Heart left ventricle (tissue), 16 donors: ENCODE measurements at regions of chr20 and their contacts with region 1.

Region 1: DNA sequence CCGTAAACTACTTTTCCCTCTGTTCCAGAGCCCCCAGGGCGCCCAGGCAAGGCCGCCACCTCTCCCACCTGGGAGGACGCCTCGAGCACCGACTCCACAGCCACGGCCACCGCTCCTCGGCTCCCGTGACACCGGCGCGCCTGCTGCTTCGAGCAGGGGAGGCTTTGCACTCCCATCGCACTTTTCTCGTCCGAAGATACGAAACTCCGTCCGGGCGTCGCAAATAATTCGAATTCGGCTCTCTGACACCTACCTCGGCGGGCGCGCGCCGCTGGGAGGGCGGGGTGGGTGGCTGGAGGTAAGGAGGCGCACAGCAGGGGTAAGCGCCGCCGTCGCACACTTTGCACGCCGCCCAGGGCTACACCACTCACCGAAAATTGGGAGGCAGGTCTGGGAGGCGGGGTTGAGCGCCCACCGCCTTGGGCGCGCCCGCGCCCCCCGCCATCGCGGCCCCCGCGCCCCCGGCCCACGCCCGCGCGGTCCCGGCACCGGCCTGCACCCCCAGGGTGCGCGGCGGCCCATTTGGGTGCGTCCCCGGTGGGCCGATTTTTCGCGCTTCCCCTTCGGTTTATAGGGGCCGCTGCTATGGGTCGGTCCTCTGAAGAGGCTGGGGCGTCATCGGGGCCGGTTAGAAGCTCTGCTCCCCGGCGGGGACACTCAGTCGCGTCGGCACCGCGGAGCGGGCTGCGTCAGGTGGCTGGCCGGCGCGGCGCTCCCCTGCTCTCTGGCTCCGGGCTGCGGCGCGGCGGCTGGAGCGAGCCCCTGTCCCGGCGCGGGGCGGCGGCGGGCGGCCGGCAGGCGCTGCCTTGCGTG is 36.2 kb downstream of the GNAS start:
- DNase-seq: peak; percentile 82 to 90 (median 86)
- ATAC-seq: peak; percentile 56 to 73 (median 70)
- H3K4me3 ChIP-seq: peak overlapping the region; percentile 21 to 97 (median 86)
- H3K27ac ChIP-seq: peak overlapping the region; percentile 56 to 100 (median 98)
- H3K4me1 ChIP-seq: peaks cover 0 to 19% (median 9%) of the 10 kb centered on the region in 12 donors
- H3K27me3 ChIP-seq: no peaks in the 10 kb centered on the region
- CTCF ChIP-seq: no peak
- POLR2A ChIP-seq: peak; percentile 87 to 96

Region 2: GRCh38 chr20:58112017-58112781 is 776.5 kb before region 1 on chr20:
- intact Hi-C with region 1: no loop called
- DNase-seq: no peak
- ATAC-seq: peak in 2 of 4 donors; percentile 16 to 46
- H3K4me3 ChIP-seq: no peak overlapping the region
- H3K27ac ChIP-seq: peak overlapping the region in 4 of 12 donors; percentile 15 to 45 (median 25)
- H3K4me1 ChIP-seq: peaks cover 0 to 5% (median 0%) of the 10 kb centered on the region in 12 donors
- H3K27me3 ChIP-seq: peaks cover 0 to 6% (median 0%) of the 10 kb centered on the region in 9 donors
- CTCF ChIP-seq: no peak
- POLR2A ChIP-seq: no peak

Region 3: GRCh38 chr20:58388882-58389323 is 499.8 kb before region 1 on chr20 and contains the start of gene VAPB:
- intact Hi-C with region 1: loop called in 1 of 10 experiments (anchors 5 kb)
- DNase-seq: peak; percentile 94 to 99 (median 96)
- ATAC-seq: peak; percentile 99 to 100 (median 99)
- H3K4me3 ChIP-seq: peak within 1 kb of the TSS; percentile 69 to 91 (median 86)
- H3K27ac ChIP-seq: peak within 1 kb of the TSS; percentile 80 to 97 (median 94)
- H3K4me1 ChIP-seq: peaks cover 0 to 46% (median 29%) of the 10 kb centered on the region in 12 donors
- H3K27me3 ChIP-seq: no peaks in the 10 kb centered on the region
- CTCF ChIP-seq: no peak
- POLR2A ChIP-seq: peak in 1 of 2 donors; percentile 85
- total RNA-seq, gene VAPB: 30.7 to 76.1 (median 63.8) TPM

Region 4: GRCh38 chr20:58980700-58981627 is 92.2 kb after region 1 on chr20 and contains the start of gene NELFCD:
- intact Hi-C with region 1: loop called in 8 of 10 experiments (anchors 1 to 5 kb)
- DNase-seq: peak; percentile 89 to 95 (median 91)
- ATAC-seq: peak; percentile 83 to 96 (median 94)
- H3K4me3 ChIP-seq: peak within 1 kb of the TSS; percentile 64 to 96 (median 78)
- H3K27ac ChIP-seq: peak within 1 kb of the TSS; percentile 53 to 93 (median 84)
- H3K4me1 ChIP-seq: peaks cover 0 to 44% (median 29%) of the 10 kb centered on the region in 12 donors
- H3K27me3 ChIP-seq: no peaks in the 10 kb centered on the region
- CTCF ChIP-seq: no peak
- POLR2A ChIP-seq: peak in 1 of 2 donors; percentile 88
- total RNA-seq, gene NELFCD: 21.7 to 43.8 (median 27.7) TPM

Region 5: DNA sequence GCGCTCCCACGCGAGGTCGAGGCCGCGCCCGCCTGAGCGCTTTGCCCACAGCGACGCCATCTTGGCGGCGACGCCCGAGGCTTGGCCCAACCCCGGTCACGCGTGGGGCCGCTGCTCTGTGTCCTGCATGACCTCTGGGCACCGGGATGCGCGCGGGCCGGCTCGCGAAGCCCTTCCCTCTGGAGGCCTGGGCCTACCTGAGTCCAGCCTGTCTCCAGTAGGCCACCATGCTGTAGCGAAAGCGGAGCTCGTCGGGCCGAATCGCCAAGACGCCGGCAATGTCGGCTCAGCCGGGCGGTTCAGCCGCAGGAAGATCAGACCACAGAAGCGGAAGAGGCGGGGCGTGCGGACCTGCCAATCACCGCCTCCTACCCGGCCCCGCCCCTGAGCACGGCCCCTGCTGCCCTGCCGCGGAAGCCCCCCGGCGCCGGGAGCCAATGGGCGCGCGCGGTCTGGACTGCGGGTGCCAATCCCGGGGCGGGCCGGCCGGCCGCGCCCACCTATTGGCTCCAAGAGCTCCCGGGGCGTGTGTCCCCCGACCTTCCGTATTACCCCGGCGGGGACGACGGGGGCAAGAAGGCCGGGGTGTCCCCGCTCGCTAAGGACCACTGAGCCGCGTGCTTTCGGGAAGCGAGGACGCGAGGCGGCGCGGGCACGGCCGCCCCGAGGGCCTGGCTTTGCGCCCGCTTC is 143.4 kb after region 1 on chr20 and contains the start of gene ATP5F1E:
- intact Hi-C with region 1: loop called in 7 of 10 experiments (anchors 2 to 5 kb)
- DNase-seq: peak; percentile 97 to 98 (median 98)
- ATAC-seq: peak; percentile 99 to 100 (median 100)
- H3K4me3 ChIP-seq: peak within 1 kb of the TSS; percentile 59 to 94 (median 83)
- H3K27ac ChIP-seq: peak within 1 kb of the TSS; percentile 83 to 98 (median 92)
- H3K4me1 ChIP-seq: peaks cover 0 to 52% (median 48%) of the 10 kb centered on the region in 12 donors
- H3K27me3 ChIP-seq: no peaks in the 10 kb centered on the region
- CTCF ChIP-seq: peak in 1 of 12 donors; percentile 3
- POLR2A ChIP-seq: peak; percentile 86 to 97
- total RNA-seq, gene ATP5F1E: 38.5 to 153 (median 116) TPM

Region 6: DNA sequence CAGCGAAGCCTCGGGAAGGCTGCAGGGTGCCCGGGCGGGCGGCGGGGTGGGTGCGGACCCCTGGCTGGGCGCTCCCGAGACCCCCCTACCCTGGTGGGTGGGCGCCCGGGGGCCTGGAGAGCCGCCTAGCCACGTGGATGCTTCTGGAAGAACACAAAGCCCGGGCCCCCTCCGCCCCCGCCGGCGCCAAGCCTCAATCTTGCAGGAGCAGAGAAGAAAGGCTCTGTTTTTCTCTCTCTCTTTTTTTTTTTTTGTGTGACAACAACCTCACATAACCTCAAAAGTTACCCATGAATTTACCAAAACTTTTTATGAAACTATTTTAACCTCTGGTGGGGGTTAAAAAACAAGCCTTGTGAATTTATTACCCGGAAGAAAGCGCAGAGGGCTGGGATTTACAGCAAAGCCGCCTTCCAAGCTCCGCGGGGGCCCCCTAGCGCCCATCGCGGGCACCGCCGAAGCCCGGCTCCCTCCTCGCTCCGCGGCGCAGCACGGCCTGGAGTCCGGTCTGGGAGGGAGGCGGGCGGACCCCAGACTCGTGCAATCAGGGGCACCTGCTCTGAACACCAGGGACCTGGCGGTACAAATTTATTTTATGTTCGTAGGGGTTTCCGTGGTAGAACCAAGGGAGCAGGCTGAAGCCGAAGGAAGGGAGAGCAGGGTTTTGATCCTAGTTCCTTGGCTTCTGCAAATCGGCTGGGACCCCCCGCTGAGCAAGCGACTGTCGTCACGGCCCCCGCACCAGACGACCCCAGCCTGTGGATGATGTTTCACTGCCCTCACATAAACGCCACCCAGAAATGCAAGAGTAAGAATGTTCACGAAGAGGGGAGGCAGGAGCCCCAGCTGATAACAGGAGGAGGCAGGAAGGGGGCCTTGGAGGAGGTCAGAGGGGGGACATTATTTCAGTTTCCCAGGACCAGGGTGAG is 333.8 kb after region 1 on chr20:
- intact Hi-C with region 1: loop called in 1 of 10 experiments (anchors 5 kb)
- DNase-seq: peak; percentile 72 to 90 (median 81)
- ATAC-seq: peak; percentile 71 to 97 (median 92)
- H3K4me3 ChIP-seq: peak overlapping the region; percentile 21 to 66 (median 58)
- H3K27ac ChIP-seq: peak overlapping the region in 9 of 12 donors; percentile 7 to 87 (median 72)
- H3K4me1 ChIP-seq: peaks cover 0 to 26% (median 14%) of the 10 kb centered on the region in 12 donors
- H3K27me3 ChIP-seq: peaks cover 0 to 31% (median 15%) of the 10 kb centered on the region in 9 donors
- CTCF ChIP-seq: peak; percentile 92 to 99 (median 97)
- POLR2A ChIP-seq: no peak